SK-N-SH (cell line): ENCODE measurements at regions of chr11 and their contacts with region 1.

Region 1: DNA sequence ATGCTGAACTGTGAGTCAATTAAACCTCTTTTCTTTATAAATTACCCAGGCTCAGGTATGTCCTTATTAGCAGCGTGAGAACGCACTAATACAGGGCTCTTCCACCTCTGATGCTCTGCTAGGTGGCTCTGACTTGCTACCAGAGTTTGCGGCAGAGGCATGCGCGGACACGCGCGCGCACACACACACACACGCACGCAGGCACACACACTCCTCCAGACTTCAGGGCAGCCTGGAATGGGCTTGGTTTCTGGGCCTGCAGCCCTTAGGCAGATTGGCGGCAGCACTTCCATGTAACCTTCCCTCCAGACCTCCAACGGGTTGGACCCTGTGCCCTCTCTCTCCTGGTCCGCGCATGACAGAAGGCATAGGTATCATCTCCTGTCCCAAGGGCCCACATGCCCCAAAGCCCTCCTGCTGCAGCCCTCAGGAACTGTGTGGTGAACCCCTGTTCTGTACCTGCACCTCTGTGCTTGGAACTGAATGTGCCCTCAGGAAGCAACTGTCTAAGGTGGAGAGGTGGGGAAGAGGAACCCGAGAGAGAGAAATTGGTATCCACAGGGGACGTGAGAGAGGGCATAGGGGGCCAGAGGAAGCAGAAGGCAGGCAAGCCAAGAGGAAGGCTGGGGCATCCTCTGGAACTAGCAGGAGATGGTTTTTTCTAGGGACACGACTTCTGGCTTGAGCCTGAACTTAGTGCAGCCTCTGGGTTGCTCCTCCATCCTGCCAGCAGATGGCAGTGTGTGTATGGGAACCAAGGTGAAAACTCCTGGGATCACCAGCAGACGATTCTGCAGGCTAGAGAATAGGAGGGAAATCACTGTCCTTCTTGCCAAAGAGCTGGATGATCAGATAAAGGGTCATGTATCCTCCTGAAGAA is 23.4 kb upstream of the RIC3 start:
- DNase-seq: peak; percentile 91
- H3K4me3 ChIP-seq: peak overlapping the region in 1 of 2 experiments; percentile 9; a peak in 1 of 4 replicates
- H3K27ac ChIP-seq: no peak overlapping the region
- H3K4me1 ChIP-seq: peaks cover 0 to 12% of the 10 kb centered on the region in 2 experiments; a peak in 1 of 4 replicates
- H3K27me3 ChIP-seq: no peaks in the 10 kb centered on the region; the same call in 1 of the 2 replicates
- CTCF ChIP-seq: peak; percentile 81
- EP300 ChIP-seq: no peak
- RAD21 ChIP-seq: peak; percentile 97

Region 2: GRCh38 chr11:8168485-8169257 is 23.6 kb before region 1 on chr11 and contains the start of gene RIC3:
- CTCF ChIA-PET with region 1: interaction called, 11 read pairs
- POLR2A ChIA-PET with region 1: interaction called, 3 read pairs
- DNase-seq: peak; percentile 74
- H3K4me3 ChIP-seq: peak within 1 kb of the TSS in 1 of 2 experiments; percentile 56; a peak in 2 of 4 replicates
- H3K27ac ChIP-seq: peak within 1 kb of the TSS in 1 of 2 experiments; percentile 80; a peak in 2 of 4 replicates
- H3K4me1 ChIP-seq: peaks cover 0 to 2% of the 10 kb centered on the region in 2 experiments; a peak in 2 of 4 replicates
- H3K27me3 ChIP-seq: peaks cover 26% of the 10 kb centered on the region
- CTCF ChIP-seq: no peak
- EP300 ChIP-seq: no peak
- RAD21 ChIP-seq: no peak
- polyA plus RNA-seq, gene RIC3: 0.54 and 1.2 TPM in 2 replicates

Region 3: DNA sequence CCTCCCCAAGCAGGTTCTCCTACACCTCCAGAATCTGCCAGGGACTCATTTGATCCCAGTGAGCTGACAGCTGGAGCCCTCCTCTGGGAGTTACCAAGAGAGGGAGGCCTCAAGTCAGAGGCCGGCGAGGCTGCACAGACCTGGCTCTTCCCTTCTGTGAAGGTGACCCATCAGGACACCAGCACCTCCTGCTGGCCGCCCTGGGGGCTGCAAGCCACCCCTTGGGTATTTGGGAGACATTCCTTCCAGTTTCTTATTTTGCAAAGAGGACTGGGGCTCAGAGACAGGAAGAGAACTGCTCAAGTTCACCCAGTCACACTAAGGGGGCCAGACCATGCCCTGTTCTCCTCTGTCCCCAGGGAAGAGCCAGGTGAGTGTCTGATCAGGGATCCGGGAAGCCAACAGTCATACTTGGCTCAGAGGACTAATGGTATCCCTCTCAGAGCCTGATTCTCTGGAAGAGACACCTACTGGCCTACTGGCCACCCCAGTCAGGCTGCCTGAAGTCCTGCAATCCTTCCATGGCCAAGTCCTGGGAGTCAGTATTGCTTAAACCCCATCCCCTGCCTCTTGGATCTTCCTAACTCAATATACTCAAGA is 17.1 kb after region 1 on chr11:
- CTCF ChIA-PET with region 1: interaction called, 46 read pairs
- POLR2A ChIA-PET with region 1: interaction called, 4 read pairs
- DNase-seq: no peak
- H3K4me3 ChIP-seq: no peak overlapping the region
- H3K27ac ChIP-seq: no peak overlapping the region
- H3K4me1 ChIP-seq: peaks cover 0 to 27% of the 10 kb centered on the region in 2 experiments; a peak in 2 of 4 replicates
- H3K27me3 ChIP-seq: no peaks in the 10 kb centered on the region; the same call in 1 of the 2 replicates
- CTCF ChIP-seq: peak; percentile 48
- EP300 ChIP-seq: no peak
- RAD21 ChIP-seq: no peak

Region 4: DNA sequence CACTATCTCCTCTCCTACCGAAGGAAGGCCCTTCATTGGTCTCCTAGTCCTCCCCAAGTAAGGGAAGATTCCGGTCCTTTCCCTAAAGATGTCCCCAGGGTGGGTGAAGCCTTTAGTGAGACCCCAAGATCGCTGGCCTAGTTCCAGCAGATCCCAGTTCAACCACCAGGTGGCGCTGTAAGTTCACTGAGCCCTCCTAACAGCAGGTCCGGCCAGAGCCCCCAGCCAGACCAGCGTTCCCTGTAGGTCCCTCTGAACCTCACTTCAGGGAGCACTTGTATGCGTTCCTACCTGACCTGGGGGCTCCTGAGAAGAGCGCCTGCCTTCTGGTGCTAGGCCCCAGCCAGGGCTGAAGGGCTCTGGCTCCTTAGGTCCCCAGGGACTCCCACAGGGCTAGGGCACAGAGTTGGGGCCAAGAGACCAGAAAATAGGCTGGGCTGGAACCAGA is 33.4 kb after region 1 on chr11:
- CTCF ChIA-PET with region 1: interaction called, 39 read pairs
- POLR2A ChIA-PET with region 1: no interaction called
- DNase-seq: peak; percentile 94
- H3K4me3 ChIP-seq: no peak overlapping the region; a peak in 1 of 4 replicates
- H3K27ac ChIP-seq: peak overlapping the region in 1 of 2 experiments; percentile 74; a peak in 2 of 4 replicates
- H3K4me1 ChIP-seq: peaks cover 0 to 66% of the 10 kb centered on the region in 2 experiments; a peak in 2 of 4 replicates
- H3K27me3 ChIP-seq: no peaks in the 10 kb centered on the region
- CTCF ChIP-seq: peak; percentile 96
- EP300 ChIP-seq: no peak
- RAD21 ChIP-seq: peak; percentile 97

Region 5: GRCh38 chr11:8247312-8247711 is 55.1 kb after region 1 on chr11:
- CTCF ChIA-PET with region 1: interaction called, 10 read pairs
- POLR2A ChIA-PET with region 1: interaction called, 3 read pairs
- DNase-seq: no peak
- H3K4me3 ChIP-seq: no peak overlapping the region
- H3K27ac ChIP-seq: peak overlapping the region in 1 of 2 experiments; percentile 55; a peak in 1 of 4 replicates
- H3K4me1 ChIP-seq: peaks cover 0 to 75% of the 10 kb centered on the region in 2 experiments; a peak in 2 of 4 replicates
- H3K27me3 ChIP-seq: peaks cover 6% of the 10 kb centered on the region; the same call in 1 of the 2 replicates
- CTCF ChIP-seq: peak; percentile 34; the same call in 1 of the 2 replicates
- EP300 ChIP-seq: no peak
- RAD21 ChIP-seq: 0 out of 2 replicates have a peak, but pooled peaks have one; percentile 20

Region 6: DNA sequence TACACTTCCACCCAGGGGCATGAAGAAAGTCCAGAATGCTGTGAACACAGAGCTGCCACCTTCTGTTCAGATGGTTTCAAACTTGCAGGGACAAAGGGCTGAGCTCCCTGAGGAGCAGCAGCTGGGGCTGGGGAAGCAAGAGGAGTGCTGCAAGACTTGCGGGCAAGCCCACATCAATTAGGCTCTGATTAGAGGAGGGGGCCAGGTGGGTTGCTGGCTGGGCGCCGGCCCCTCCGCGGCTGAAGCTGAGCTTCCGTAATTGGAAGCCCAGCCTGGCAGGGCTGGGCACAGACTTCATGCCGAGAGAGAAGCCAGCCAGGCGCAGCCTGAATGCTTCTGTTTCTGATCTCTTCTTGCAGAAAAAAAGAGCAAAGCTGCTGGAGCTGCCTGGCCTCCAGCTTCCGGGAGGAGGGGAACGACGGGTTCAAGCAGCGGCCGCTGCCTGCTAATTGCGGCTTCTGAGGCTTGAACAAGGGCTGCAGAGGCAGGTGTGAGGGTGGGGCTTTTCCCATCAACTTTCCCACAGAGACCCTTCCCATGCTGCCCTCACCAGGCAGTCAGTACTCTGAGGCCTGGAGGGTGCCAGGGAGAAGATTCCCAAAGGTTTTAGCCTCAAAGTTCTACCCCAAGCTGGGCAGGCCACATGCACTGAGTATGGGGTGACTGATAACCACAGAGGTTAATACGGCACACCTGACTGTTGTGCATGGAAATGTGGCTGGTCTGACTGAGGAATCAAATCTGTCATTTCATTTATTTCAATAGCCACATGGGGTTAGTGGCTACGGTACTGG is 162.6 kb after region 1 on chr11:
- CTCF ChIA-PET with region 1: interaction called, 10 read pairs
- POLR2A ChIA-PET with region 1: no interaction called
- DNase-seq: peak; percentile 79
- H3K4me3 ChIP-seq: peak overlapping the region in 1 of 2 experiments; percentile 24; a peak in 3 of 4 replicates
- H3K27ac ChIP-seq: peak overlapping the region in 1 of 2 experiments; percentile 91; a peak in 2 of 4 replicates
- H3K4me1 ChIP-seq: peaks cover 0 to 48% of the 10 kb centered on the region in 2 experiments; a peak in 1 of 4 replicates
- H3K27me3 ChIP-seq: no peaks in the 10 kb centered on the region; the same call in 1 of the 2 replicates
- CTCF ChIP-seq: no peak
- EP300 ChIP-seq: no peak
- RAD21 ChIP-seq: peak; percentile 44; the same call in 1 of the 2 replicates